Heart left ventricle (tissue), 16 donors: ENCODE measurements at regions of chr5 and their contacts with region 1.

Region 1: GRCh38 chr5:126676195-126676624 is 75.5 kb downstream of the PHAX start:
- DNase-seq: peak in 2 of 5 donors; percentile 28 to 46
- ATAC-seq: peak in 3 of 4 donors; percentile 74 to 80 (median 77)
- H3K4me3 ChIP-seq: no peak overlapping the region
- H3K27ac ChIP-seq: no peak overlapping the region
- H3K4me1 ChIP-seq: peaks cover 0 to 4% (median 0%) of the 10 kb centered on the region in 12 donors
- H3K27me3 ChIP-seq: no peaks in the 10 kb centered on the region
- CTCF ChIP-seq: peak; percentile 64 to 84 (median 80)
- POLR2A ChIP-seq: no peak

Region 2: DNA sequence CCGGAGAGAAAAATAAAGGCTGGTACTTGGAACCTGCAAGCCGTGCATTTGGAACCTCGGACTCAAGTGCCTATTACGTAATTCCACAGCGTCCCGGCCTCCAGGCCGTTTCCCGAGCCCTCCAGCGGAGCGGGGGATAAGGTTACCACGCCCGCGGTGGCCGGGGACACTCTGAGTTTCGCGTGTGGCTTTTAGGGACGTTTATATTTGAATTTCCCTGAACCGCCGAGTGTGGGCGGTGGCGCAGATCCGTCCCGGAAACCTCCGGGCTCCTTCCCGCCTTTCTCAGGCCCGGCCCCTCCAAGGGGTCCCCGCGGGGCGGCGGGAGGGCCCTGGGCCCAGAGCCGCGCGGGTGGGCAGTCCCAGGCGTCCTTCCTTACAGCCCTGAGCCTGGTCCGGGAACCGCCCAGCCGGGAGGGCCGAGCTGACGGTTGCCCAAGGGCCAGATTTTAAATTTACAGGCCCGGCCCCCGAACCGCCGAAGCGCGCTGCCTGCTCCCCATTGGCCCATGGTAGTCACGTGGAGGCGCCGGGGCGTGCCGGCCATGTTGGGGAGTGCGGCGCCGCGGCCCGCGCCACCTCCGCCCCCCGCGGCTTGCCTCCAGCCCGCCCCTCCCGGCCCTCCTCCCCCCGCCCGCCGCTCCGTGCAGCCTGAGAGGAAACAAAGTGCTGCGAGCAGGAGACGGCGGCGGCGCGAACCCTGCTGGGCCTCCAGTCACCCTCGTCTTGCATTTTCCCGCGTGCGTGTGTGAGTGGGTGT is 100.5 kb after region 1 on chr5 and contains the start of gene LMNB1:
- intact Hi-C with region 1: loop called (anchors 1 to 5 kb)
- DNase-seq: peak; percentile 94 to 98 (median 95)
- ATAC-seq: peak; percentile 91 to 97 (median 95)
- H3K4me3 ChIP-seq: peak within 1 kb of the TSS; percentile 64 to 88 (median 80)
- H3K27ac ChIP-seq: peak within 1 kb of the TSS; percentile 55 to 94 (median 86)
- H3K4me1 ChIP-seq: peaks cover 0 to 33% (median 11%) of the 10 kb centered on the region in 12 donors
- H3K27me3 ChIP-seq: no peaks in the 10 kb centered on the region
- CTCF ChIP-seq: peak in 4 of 12 donors; percentile 13 to 39 (median 25)
- POLR2A ChIP-seq: peak in 1 of 2 donors; percentile 26
- total RNA-seq, gene LMNB1: 1.3 to 27.8 (median 1.8) TPM

Region 3: DNA sequence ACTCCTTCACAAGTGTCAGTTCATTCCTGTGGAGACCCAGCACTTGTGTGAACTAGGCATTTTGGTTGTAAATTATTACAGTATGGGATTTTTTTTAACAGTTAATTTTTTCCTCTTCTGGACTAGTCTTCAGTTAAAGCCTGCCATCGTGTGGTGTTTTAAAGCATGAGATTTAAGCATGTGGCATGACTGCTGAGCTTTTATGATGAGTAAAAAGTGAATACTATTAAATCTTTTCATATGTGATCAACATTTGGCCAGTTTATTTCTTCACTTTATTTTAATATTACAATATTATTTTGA is 125.7 kb after region 1 on chr5:
- intact Hi-C with region 1: loop called in 2 of 10 experiments (anchors 5 to 10 kb)
- DNase-seq: no peak
- ATAC-seq: no peak
- H3K4me3 ChIP-seq: no peak overlapping the region
- H3K27ac ChIP-seq: no peak overlapping the region
- H3K4me1 ChIP-seq: peaks cover 0 to 7% (median 0%) of the 10 kb centered on the region in 12 donors
- H3K27me3 ChIP-seq: no peaks in the 10 kb centered on the region
- CTCF ChIP-seq: peak in 8 of 12 donors; percentile 9 to 48 (median 36)
- POLR2A ChIP-seq: no peak

Region 4: GRCh38 chr5:126808521-126808988 is 132.3 kb after region 1 on chr5:
- intact Hi-C with region 1: loop called in 2 of 10 experiments (anchors 5 to 10 kb)
- DNase-seq: no peak
- ATAC-seq: peak in 3 of 4 donors; percentile 33 to 61 (median 39)
- H3K4me3 ChIP-seq: peak overlapping the region in 1 of 12 donors; percentile 30
- H3K27ac ChIP-seq: peak overlapping the region in 1 of 12 donors; percentile 90
- H3K4me1 ChIP-seq: peaks cover 0 to 64% (median 0%) of the 10 kb centered on the region in 12 donors
- H3K27me3 ChIP-seq: no peaks in the 10 kb centered on the region
- CTCF ChIP-seq: peak; percentile 30 to 63 (median 48)
- POLR2A ChIP-seq: no peak

Region 5: GRCh38 chr5:127313847-127314473 is 637.8 kb after region 1 on chr5:
- intact Hi-C with region 1: loop called in 2 of 10 experiments (anchors 2 to 10 kb)
- DNase-seq: peak; percentile 34 to 64 (median 48)
- ATAC-seq: peak in 3 of 4 donors; percentile 64 to 68 (median 66)
- H3K4me3 ChIP-seq: no peak overlapping the region
- H3K27ac ChIP-seq: no peak overlapping the region
- H3K4me1 ChIP-seq: no peaks in the 10 kb centered on the region
- H3K27me3 ChIP-seq: no peaks in the 10 kb centered on the region
- CTCF ChIP-seq: peak; percentile 68 to 86 (median 78)
- POLR2A ChIP-seq: no peak